ENCODE measurements at regions of chr3 and their contacts with region 1.

Region 1: GRCh38 chr3:191328383-191328961 is 722 bp upstream of the CCDC50 start:
- DNase-seq: no peak
- H3K4me3 ChIP-seq: peak overlapping the region; percentile 82
- H3K27ac ChIP-seq: peak overlapping the region in 1 of 2 donors; percentile 92
- H3K4me1 ChIP-seq: no peaks in the 10 kb centered on the region
- H3K27me3 ChIP-seq: no peaks in the 10 kb centered on the region
- CTCF ChIP-seq: no peak
- EP300 ChIP-seq: no peak
- POLR2A ChIP-seq: no peak

Region 2: DNA sequence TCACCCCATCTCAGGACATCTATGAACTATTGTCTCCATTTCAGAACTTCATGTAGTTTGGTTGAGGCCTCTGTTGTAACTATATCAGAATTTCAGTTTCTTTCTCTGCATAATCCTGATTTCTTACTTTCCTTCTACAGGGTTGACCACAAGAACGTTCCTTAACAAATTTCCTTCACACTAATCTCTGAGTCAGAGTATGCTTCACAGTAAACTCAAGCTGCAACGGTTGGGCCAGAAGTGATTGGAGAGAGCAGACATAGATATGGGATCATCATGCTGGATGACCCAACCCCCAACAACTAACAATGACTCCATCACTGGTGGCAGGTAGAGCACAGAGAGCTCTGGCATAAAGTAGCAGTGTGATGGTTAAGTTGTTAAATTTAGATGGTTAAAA is 258.3 kb before region 1 on chr3:
- intact Hi-C with region 1: no loop called
- DNase-seq: no peak
- H3K4me3 ChIP-seq: no peak overlapping the region
- H3K27ac ChIP-seq: no peak overlapping the region
- H3K4me1 ChIP-seq: no peaks in the 10 kb centered on the region
- H3K27me3 ChIP-seq: no peaks in the 10 kb centered on the region
- CTCF ChIP-seq: no peak
- EP300 ChIP-seq: no peak
- POLR2A ChIP-seq: no peak

Region 3: DNA sequence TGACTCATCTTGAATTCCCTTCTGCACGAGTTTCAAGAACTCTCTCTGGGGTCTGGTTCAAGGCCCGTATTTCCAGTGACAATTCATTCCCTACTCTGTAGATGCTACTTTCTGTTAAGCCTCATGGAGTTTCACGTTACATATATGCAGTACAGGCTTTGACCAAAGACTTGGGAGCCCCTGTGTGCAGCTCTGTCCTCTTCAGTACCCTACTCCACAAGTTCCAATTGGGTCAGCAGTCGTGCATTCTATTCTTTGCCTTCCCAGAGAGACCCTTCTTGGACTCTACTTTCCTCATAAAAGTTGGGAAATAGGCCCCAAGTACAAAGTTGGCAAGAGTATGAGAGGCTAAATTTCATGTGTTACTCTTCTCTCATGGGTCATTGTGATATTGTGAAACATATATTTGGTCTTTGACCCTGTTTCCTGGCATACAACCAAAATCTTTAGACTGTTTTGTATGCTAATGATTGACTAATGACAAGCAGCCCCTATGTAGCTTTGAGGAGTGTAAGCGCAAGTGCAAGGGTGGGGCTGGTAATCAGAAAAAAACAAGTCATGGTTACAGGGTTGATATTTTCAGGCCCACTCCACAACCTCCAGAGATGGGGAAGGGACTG is 14.3 kb before region 1 on chr3:
- intact Hi-C with region 1: no loop called
- DNase-seq: no peak
- H3K4me3 ChIP-seq: no peak overlapping the region
- H3K27ac ChIP-seq: no peak overlapping the region
- H3K4me1 ChIP-seq: no peaks in the 10 kb centered on the region
- H3K27me3 ChIP-seq: no peaks in the 10 kb centered on the region
- CTCF ChIP-seq: no peak
- EP300 ChIP-seq: no peak
- POLR2A ChIP-seq: no peak

Region 4: DNA sequence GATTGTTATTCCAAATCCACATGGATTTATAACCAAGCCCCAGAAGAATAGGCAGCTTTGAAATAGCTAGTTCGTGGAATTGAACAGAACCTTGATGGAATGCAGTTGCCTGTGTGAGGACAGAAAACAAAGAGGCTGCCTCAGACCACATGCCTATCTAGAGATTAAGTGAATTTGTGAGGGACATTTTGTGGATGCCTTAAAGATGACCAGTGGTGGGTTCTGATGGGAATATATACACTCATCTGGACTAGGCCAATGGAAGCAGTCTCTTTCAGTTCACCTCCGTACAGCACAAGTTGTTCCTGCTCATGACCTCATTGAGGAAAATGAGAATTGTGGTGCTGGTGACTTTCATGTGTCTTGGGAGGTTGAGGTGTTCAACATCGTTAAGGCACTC is 69.3 kb after region 1 on chr3:
- intact Hi-C with region 1: loop called in 1 of 4 experiments (anchors 2 kb)
- DNase-seq: no peak
- H3K4me3 ChIP-seq: no peak overlapping the region
- H3K27ac ChIP-seq: no peak overlapping the region
- H3K4me1 ChIP-seq: peaks cover 3% of the 10 kb centered on the region
- H3K27me3 ChIP-seq: no peaks in the 10 kb centered on the region
- CTCF ChIP-seq: no peak
- EP300 ChIP-seq: no peak
- POLR2A ChIP-seq: no peak